ENCODE measurements at regions of chr12 and their contacts with region 1.

Region 1: DNA sequence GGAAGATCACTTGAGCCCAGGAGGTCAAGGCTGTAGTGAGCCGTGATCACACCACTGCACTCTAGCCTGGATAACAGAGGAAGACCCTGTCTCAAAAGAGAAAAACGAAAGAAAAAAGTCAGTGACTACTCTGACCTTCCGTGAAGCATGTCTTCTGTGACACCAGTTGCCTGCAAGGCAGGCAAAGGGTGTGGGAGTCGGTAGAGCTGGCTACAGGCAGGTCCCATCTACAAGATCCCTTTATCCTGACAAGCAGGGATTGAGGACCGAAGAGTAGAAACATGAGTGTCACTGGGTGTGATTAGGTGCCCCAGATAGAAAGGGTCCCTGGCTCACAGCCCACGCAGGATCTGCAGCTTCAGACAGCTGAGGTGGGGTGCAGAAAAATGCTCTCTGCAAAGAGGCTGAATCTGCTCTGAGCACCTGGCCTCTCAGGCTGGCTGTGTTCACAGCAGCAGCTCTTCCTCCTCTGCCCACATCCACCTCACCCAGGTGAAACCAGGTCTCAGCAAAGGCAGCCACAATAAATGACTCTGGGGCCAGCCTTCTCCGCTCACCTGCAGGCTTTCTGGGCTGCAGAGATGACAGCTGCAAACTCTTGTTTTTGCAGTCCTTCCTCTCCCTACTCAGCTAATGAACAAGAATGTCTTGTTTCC is 28.6 kb upstream of the HSP90B1 start:
- DNase-seq: peak in 7 of 9 donors; percentile 63 to 84 (median 78)
- ATAC-seq: peak; percentile 96
- H3K4me3 ChIP-seq: peak overlapping the region; percentile 50
- H3K4me3 Mint-ChIP-seq: peak overlapping the region; percentile 40 to 84 (median 74)
- H3K27ac ChIP-seq: peak overlapping the region; percentile 66
- H3K27ac Mint-ChIP-seq: peak overlapping the region in 8 of 9 donors; percentile 80 to 97 (median 94)
- H3K4me1 ChIP-seq: peaks cover 19 to 54% of the 10 kb centered on the region in 2 donors
- H3K4me1 Mint-ChIP-seq: peaks cover 18 to 79% (median 62%) of the 10 kb centered on the region in 7 donors
- H3K27me3 ChIP-seq: no peaks in the 10 kb centered on the region
- H3K27me3 Mint-ChIP-seq: no peaks in the 10 kb centered on the region

Region 2: GRCh38 chr12:103884316-103884715 is 17.3 kb before region 1 on chr12:
- CTCF ChIA-PET with region 1: no interaction called
- POLR2A ChIA-PET with region 1: interaction called, 7 read pairs
- intact Hi-C with region 1: loop called in 1 of 2 experiments (anchors 1 kb)
- DNase-seq: peak in 7 of 9 donors; percentile 36 to 68 (median 53)
- ATAC-seq: peak; percentile 68
- H3K4me3 ChIP-seq: no peak overlapping the region
- H3K4me3 Mint-ChIP-seq: peak overlapping the region in 3 of 10 donors; percentile 30 to 64 (median 39)
- H3K27ac ChIP-seq: no peak overlapping the region
- H3K27ac Mint-ChIP-seq: peak overlapping the region in 6 of 9 donors; percentile 19 to 74 (median 46)
- H3K4me1 ChIP-seq: no peaks in the 10 kb centered on the region
- H3K4me1 Mint-ChIP-seq: peaks cover 4 to 24% (median 16%) of the 10 kb centered on the region in 7 donors
- H3K27me3 ChIP-seq: no peaks in the 10 kb centered on the region
- H3K27me3 Mint-ChIP-seq: no peaks in the 10 kb centered on the region

Region 3: DNA sequence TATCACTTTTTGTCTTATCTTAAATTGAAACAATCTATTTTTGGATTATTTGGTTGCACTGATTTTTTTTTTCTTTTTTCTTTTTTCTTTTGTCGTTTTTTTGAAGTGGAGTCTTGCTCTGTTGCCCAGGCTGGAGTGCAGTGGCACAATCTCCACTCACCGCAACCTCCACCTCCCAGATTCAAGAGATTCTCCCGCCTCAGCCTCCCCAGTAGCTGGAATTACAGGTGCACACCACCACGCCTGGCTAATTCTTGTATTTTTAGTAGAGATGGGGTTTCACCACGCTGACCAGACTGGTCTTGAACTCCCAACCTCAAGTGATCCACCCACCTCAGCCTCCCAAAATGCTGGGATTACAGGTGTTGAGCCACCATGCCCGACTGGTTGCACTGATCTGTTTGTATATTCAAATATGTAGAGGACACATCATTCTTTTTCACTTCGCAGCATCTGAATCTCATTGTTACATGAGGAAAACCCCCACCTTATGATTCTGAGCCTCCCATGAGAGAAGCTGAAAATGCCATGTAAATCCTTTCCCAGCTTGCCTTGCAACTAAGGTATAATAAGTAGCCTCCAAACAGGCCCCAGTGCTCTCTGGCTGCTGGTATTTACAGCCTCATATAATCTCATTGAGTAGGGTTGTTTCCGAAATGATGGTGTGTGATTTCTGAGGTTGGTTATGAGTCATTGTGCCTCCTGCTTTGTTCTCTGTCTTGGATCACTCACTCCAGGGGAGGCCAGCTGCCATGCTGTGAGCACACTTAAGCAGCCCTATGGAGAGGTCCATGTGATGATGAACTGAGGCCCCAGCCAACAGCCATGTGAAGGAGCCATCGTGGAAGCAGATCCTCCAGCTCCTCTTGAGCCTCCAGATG is 23.4 kb after region 1 on chr12:
- CTCF ChIA-PET with region 1: interaction called, 13 read pairs
- POLR2A ChIA-PET with region 1: interaction called, 149 read pairs
- intact Hi-C with region 1: loop called in 1 of 2 experiments (anchors 1 kb)
- DNase-seq: peak in 1 of 9 donors; percentile 55
- ATAC-seq: no peak
- H3K4me3 ChIP-seq: no peak overlapping the region
- H3K4me3 Mint-ChIP-seq: peak overlapping the region in 1 of 10 donors; percentile 40
- H3K27ac ChIP-seq: no peak overlapping the region
- H3K27ac Mint-ChIP-seq: peak overlapping the region in 3 of 9 donors; percentile 37 to 62 (median 51)
- H3K4me1 ChIP-seq: peaks cover 10 to 13% of the 10 kb centered on the region in 2 donors
- H3K4me1 Mint-ChIP-seq: peaks cover 11 to 36% (median 17%) of the 10 kb centered on the region in 7 donors
- H3K27me3 ChIP-seq: no peaks in the 10 kb centered on the region
- H3K27me3 Mint-ChIP-seq: peaks cover 0 to 2% (median 0%) of the 10 kb centered on the region in 5 donors